Right ventricle myocardium inferior (tissue), 1 donor: ENCODE measurements at regions of chr1 and their contacts with region 1.

Region 1: GRCh38 chr1:46616277-46617107 is at the start of gene MOB3C:
- DNase-seq: peak; percentile 94
- ATAC-seq: peak; percentile 94
- total RNA-seq, gene MOB3C: 13.9 TPM

Region 2: GRCh38 chr1:46718727-46719622 is 102.5 kb after region 1 on chr1 and contains the start of gene EFCAB14:
- intact Hi-C with region 1: loop called (anchors 2 kb)
- DNase-seq: peak; percentile 98
- ATAC-seq: peak; percentile 99
- total RNA-seq, gene EFCAB14: 53.2 TPM

Region 3: GRCh38 chr1:47409311-47410070 is 793.0 kb after region 1 on chr1:
- intact Hi-C with region 1: no loop called
- DNase-seq: no peak
- ATAC-seq: peak; percentile 39